Testis (tissue), 5 donors: ENCODE measurements at regions of chr16 and their contacts with region 1.

Region 1: GRCh38 chr16:57519796-57520360 is 16.5 kb downstream of the CCDC102A start:
- DNase-seq: peak; percentile 87
- H3K4me3 ChIP-seq: no peak overlapping the region
- H3K27ac ChIP-seq: no peak overlapping the region
- H3K4me1 ChIP-seq: no peaks in the 10 kb centered on the region
- H3K27me3 ChIP-seq: no peaks in the 10 kb centered on the region
- CTCF ChIP-seq: peak; percentile 84 to 93 (median 84)
- POLR2A ChIP-seq: no peak

Region 2: GRCh38 chr16:57422026-57422944 is 97.6 kb before region 1 on chr16:
- intact Hi-C with region 1: loop called (anchors 10 kb)
- DNase-seq: peak; percentile 65
- H3K4me3 ChIP-seq: no peak overlapping the region
- H3K27ac ChIP-seq: no peak overlapping the region
- H3K4me1 ChIP-seq: peaks cover 12% of the 10 kb centered on the region
- H3K27me3 ChIP-seq: no peaks in the 10 kb centered on the region
- CTCF ChIP-seq: peak; percentile 50 to 62 (median 56)
- POLR2A ChIP-seq: no peak

Region 3: GRCh38 chr16:57916735-57917451 is 397.0 kb after region 1 on chr16:
- intact Hi-C with region 1: no loop called
- DNase-seq: no peak
- H3K4me3 ChIP-seq: no peak overlapping the region
- H3K27ac ChIP-seq: no peak overlapping the region
- H3K4me1 ChIP-seq: no peaks in the 10 kb centered on the region
- H3K27me3 ChIP-seq: no peaks in the 10 kb centered on the region
- CTCF ChIP-seq: no peak
- POLR2A ChIP-seq: no peak